ENCODE measurements at regions of chr2 and their contacts with region 1.

Region 1: DNA sequence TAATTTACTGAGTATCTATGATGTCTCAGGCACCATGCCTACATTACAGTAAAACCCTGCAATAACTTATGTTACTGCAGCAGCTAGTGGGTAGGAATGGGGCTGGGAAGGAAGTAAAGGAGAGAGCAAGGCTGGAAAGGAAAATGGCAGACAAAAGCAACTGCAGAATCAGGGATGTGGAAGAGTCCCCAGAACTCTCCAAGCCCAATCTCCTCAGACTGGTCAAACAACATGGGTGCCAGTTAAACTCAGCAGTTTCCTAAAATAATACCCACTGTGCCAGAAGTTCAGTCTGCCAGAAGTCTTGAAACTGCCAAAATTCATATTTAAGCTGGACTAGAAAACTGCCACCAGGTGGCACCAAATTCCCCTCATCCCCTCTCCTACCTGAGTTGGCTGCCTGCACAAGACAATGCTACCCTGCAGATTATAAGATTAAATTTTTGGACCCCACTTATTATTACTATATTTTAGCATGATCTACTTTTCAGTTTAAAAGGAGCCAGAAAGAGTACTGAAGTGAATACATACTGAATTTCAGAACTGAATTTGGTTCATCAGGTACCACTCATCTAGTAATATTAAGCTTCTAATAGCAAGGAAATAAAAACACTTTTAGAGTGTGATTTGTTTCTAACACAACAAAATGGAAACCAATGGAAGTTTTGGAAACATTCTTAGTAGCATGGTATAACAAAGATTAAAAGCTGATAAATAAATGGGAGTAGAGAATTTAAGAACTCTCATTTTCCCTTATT is 86.8 kb upstream of the DNER start:
- DNase-seq: peak; percentile 33 to 76 (median 66)
- ATAC-seq: peak; percentile 70
- H3K4me3 ChIP-seq: no peak overlapping the region
- H3K4me3 Mint-ChIP-seq: no peak overlapping the region
- H3K27ac ChIP-seq: no peak overlapping the region
- H3K27ac Mint-ChIP-seq: peak overlapping the region in 6 of 9 donors; percentile 13 to 65 (median 40)
- H3K4me1 ChIP-seq: no peaks in the 10 kb centered on the region
- H3K4me1 Mint-ChIP-seq: peaks cover 0 to 6% (median 0%) of the 10 kb centered on the region in 7 donors
- H3K27me3 ChIP-seq: no peaks in the 10 kb centered on the region
- H3K27me3 Mint-ChIP-seq: no peaks in the 10 kb centered on the region

Region 2: GRCh38 chr2:229675569-229675968 is 125.6 kb before region 1 on chr2:
- CTCF ChIA-PET with region 1: no interaction called
- POLR2A ChIA-PET with region 1: no interaction called
- intact Hi-C with region 1: no loop called
- DNase-seq: no peak
- ATAC-seq: no peak
- H3K4me3 ChIP-seq: no peak overlapping the region
- H3K4me3 Mint-ChIP-seq: no peak overlapping the region
- H3K27ac ChIP-seq: no peak overlapping the region
- H3K27ac Mint-ChIP-seq: no peak overlapping the region
- H3K4me1 ChIP-seq: no peaks in the 10 kb centered on the region
- H3K4me1 Mint-ChIP-seq: no peaks in the 10 kb centered on the region
- H3K27me3 ChIP-seq: peaks cover 0 to 3% of the 10 kb centered on the region in 2 donors
- H3K27me3 Mint-ChIP-seq: peaks cover 41 to 76% (median 69%) of the 10 kb centered on the region in 5 donors

Region 3: GRCh38 chr2:229852565-229852964 is 51.4 kb after region 1 on chr2:
- CTCF ChIA-PET with region 1: no interaction called
- POLR2A ChIA-PET with region 1: interaction called, 5 read pairs
- intact Hi-C with region 1: loop called (anchors 1 to 5 kb)
- DNase-seq: peak in 7 of 9 donors; percentile 45 to 70 (median 58)
- ATAC-seq: peak; percentile 91
- H3K4me3 ChIP-seq: no peak overlapping the region
- H3K4me3 Mint-ChIP-seq: peak overlapping the region in 9 of 10 donors; percentile 14 to 64 (median 27)
- H3K27ac ChIP-seq: peak overlapping the region; percentile 53
- H3K27ac Mint-ChIP-seq: peak overlapping the region; percentile 51 to 96 (median 86)
- H3K4me1 ChIP-seq: peaks cover 25 to 37% of the 10 kb centered on the region in 2 donors
- H3K4me1 Mint-ChIP-seq: peaks cover 30 to 92% (median 73%) of the 10 kb centered on the region in 7 donors
- H3K27me3 ChIP-seq: no peaks in the 10 kb centered on the region
- H3K27me3 Mint-ChIP-seq: no peaks in the 10 kb centered on the region

Region 4: DNA sequence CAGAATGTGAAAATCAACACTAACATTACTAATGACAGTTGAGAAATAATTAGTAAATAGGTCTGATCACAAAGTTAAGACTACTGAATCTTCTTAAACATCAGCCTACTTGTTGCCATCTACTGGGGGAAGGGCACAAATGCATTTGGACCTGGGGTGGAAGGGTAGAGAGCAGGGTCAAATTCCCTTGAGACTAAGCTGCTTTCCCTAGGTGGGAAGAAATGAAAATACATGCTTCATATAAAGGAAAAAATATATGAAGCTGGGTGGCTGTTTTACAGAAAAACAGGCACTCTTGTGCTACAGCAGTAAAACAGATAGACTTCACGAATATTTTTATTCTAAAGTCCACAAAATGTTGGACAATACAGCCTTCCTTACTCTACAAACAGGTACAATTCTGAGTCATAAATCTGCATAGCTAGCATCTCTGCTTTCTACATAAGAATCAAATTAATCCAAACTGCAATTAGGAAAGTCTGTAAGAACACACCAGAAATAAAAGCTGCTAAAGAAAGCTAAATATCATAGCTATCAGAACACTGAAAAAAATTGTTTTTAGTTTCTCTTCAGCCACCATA is 109.7 kb after region 1 on chr2:
- CTCF ChIA-PET with region 1: interaction called, 19 read pairs
- POLR2A ChIA-PET with region 1: no interaction called
- intact Hi-C with region 1: loop called (anchors 1 kb)
- DNase-seq: peak in 6 of 9 donors; percentile 10 to 36 (median 28)
- ATAC-seq: peak; percentile 79
- H3K4me3 ChIP-seq: no peak overlapping the region
- H3K4me3 Mint-ChIP-seq: peak overlapping the region in 7 of 10 donors; percentile 8 to 65 (median 14)
- H3K27ac ChIP-seq: peak overlapping the region; percentile 12
- H3K27ac Mint-ChIP-seq: peak overlapping the region; percentile 5 to 84 (median 56)
- H3K4me1 ChIP-seq: peaks cover 13 to 31% of the 10 kb centered on the region in 2 donors
- H3K4me1 Mint-ChIP-seq: peaks cover 35 to 68% (median 59%) of the 10 kb centered on the region in 7 donors
- H3K27me3 ChIP-seq: no peaks in the 10 kb centered on the region
- H3K27me3 Mint-ChIP-seq: no peaks in the 10 kb centered on the region

Region 5: GRCh38 chr2:229996320-229996719 is 195.1 kb after region 1 on chr2:
- CTCF ChIA-PET with region 1: no interaction called
- POLR2A ChIA-PET with region 1: no interaction called
- intact Hi-C with region 1: no loop called
- DNase-seq: no peak
- ATAC-seq: no peak
- H3K4me3 ChIP-seq: no peak overlapping the region
- H3K4me3 Mint-ChIP-seq: no peak overlapping the region
- H3K27ac ChIP-seq: no peak overlapping the region
- H3K27ac Mint-ChIP-seq: no peak overlapping the region
- H3K4me1 ChIP-seq: no peaks in the 10 kb centered on the region
- H3K4me1 Mint-ChIP-seq: peaks cover 0 to 7% (median 0%) of the 10 kb centered on the region in 7 donors
- H3K27me3 ChIP-seq: no peaks in the 10 kb centered on the region
- H3K27me3 Mint-ChIP-seq: peaks cover 0 to 6% (median 0%) of the 10 kb centered on the region in 5 donors

Region 6: GRCh38 chr2:230068016-230068650 is 267.0 kb after region 1 on chr2:
- CTCF ChIA-PET with region 1: interaction called, 3 read pairs
- POLR2A ChIA-PET with region 1: no interaction called
- intact Hi-C with region 1: loop called in 1 of 2 experiments (anchors 1 kb)
- DNase-seq: peak; percentile 16 to 62 (median 38)
- ATAC-seq: peak; percentile 40
- H3K4me3 ChIP-seq: peak overlapping the region; percentile 62
- H3K4me3 Mint-ChIP-seq: peak overlapping the region; percentile 81 to 96 (median 90)
- H3K27ac ChIP-seq: no peak overlapping the region
- H3K27ac Mint-ChIP-seq: peak overlapping the region in 3 of 9 donors; percentile 69 to 80 (median 74)
- H3K4me1 ChIP-seq: peaks cover 0 to 7% of the 10 kb centered on the region in 2 donors
- H3K4me1 Mint-ChIP-seq: peaks cover 8 to 18% (median 12%) of the 10 kb centered on the region in 7 donors
- H3K27me3 ChIP-seq: no peaks in the 10 kb centered on the region
- H3K27me3 Mint-ChIP-seq: peaks cover 4 to 32% (median 5%) of the 10 kb centered on the region in 5 donors

Region 7: DNA sequence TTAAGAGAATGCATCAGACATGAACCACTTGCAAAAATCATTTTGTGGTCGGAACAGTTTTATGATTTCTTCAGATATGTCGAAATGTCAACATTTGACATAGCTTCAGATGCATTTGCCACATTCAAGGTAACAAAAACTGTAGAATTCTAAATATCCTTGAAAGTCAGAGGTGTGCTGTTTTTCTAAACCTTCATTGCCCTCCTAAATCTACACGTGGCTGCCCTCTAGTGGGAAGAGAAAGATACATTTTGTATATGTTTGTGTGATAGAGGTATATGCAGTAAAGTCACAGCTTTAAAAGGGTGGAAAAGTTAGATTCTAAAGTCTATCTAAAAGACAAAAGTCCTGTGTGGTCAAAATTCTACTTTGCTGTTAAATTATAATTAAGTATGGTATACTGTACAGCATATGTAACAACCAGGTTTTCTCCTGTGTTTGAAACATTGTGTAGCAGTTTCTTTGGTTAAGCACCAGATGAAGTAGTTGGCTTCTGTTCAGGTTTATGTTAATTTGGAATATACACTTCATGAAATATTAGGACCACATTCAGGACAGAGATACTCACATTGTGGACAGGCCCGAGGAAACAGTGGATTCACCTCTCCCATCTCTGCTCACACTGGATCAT is 997.7 kb after region 1 on chr2:
- CTCF ChIA-PET with region 1: interaction called, 4 read pairs
- POLR2A ChIA-PET with region 1: no interaction called
- intact Hi-C with region 1: loop called in 1 of 2 experiments (anchors 10 kb)
- DNase-seq: peak in 7 of 9 donors; percentile 44 to 76 (median 69)
- ATAC-seq: peak; percentile 58
- H3K4me3 ChIP-seq: no peak overlapping the region
- H3K4me3 Mint-ChIP-seq: peak overlapping the region in 3 of 10 donors; percentile 8 to 33 (median 15)
- H3K27ac ChIP-seq: no peak overlapping the region
- H3K27ac Mint-ChIP-seq: peak overlapping the region in 4 of 9 donors; percentile 59 to 76 (median 69)
- H3K4me1 ChIP-seq: peaks cover 30 to 41% of the 10 kb centered on the region in 2 donors
- H3K4me1 Mint-ChIP-seq: peaks cover 6 to 34% (median 26%) of the 10 kb centered on the region in 7 donors
- H3K27me3 ChIP-seq: no peaks in the 10 kb centered on the region
- H3K27me3 Mint-ChIP-seq: no peaks in the 10 kb centered on the region

Measured in naive thymus-derived CD4-positive, alpha-beta T cell (primary cell).